Right lobe of liver (tissue), 6 donors: ENCODE measurements at regions of chr2 and their contacts with region 1.

Region 1: DNA sequence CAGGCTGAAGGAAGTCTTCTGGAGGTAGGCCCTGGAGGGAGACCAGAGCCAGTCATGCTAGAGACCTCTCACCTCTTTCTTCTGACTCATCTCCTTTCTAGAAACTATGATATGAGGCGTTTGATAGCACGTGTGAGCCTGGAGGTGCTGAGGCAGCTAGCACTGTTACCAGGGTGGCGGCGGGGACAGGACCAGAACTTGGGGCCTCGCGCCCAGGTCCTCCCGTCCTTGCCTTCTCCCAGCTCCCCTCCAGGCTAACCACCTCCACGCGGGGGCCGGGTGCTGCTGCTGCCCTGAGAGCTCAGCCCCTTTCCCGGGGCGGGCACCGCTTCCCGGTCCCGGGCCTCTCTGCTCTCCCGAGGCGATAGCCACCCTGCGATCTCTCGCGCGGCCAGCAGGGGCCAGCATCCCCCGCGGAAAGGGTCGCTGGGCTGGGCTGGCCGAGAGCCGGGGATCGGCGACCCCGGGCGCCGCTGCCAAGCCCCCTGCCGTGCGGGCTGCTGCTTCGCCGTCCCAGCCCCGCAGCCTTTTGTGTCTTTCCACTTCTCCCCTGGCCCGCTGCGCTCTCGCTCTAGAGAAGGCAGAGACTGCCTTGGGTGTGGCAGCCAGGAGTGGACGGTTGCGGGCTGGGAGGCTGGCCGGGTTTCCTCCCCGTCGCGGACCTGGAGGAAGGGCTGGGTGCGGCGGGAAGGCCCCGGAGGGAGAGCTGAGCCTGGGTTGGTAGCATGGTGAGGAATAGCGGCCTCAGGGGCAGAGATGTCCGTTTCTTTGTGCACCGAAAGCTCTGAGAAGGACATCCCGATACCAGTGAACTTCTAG is 49.1 kb downstream of the TMEM17 start:
- DNase-seq: peak; percentile 82 to 85 (median 84)
- ATAC-seq: peak; percentile 85 to 90 (median 86)
- H3K4me3 ChIP-seq: peak overlapping the region; percentile 64 to 76 (median 69)
- H3K27ac ChIP-seq: peak overlapping the region; percentile 89 to 91 (median 89)
- H3K4me1 ChIP-seq: peaks cover 0 to 37% (median 18%) of the 10 kb centered on the region in 4 donors
- H3K27me3 ChIP-seq: no peaks in the 10 kb centered on the region
- CTCF ChIP-seq: peak; percentile 92 to 99 (median 98)
- POLR2A ChIP-seq: no peak

Region 2: DNA sequence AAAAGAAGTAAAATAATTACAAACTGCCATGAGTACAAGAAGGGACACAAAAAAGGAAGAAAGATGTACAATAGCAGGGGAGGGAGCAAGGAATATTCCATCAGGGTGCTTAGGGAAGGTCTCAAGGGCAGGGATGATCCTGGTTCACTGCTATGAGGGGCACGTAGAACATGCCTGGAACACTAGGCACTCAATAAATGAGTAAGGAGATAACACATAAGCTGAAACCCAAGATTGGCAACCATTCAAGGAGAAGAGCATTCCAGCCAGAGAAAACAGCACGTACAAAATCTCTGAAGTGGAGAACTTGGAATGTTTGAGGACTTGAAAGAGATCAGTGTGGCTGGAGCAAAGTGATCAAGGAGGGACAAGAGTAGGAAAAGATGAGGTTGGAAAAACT is 706.3 kb before region 1 on chr2:
- intact Hi-C with region 1: no loop called
- DNase-seq: no peak
- ATAC-seq: peak in 1 of 4 donors; percentile 24
- H3K4me3 ChIP-seq: no peak overlapping the region
- H3K27ac ChIP-seq: no peak overlapping the region
- H3K4me1 ChIP-seq: no peaks in the 10 kb centered on the region
- H3K27me3 ChIP-seq: no peaks in the 10 kb centered on the region
- CTCF ChIP-seq: no peak
- POLR2A ChIP-seq: no peak

Region 3: GRCh38 chr2:62577994-62578781 is 121.3 kb after region 1 on chr2:
- intact Hi-C with region 1: loop called in 1 of 2 experiments (anchors 10 kb)
- DNase-seq: no peak
- ATAC-seq: peak in 1 of 4 donors; percentile 50
- H3K4me3 ChIP-seq: no peak overlapping the region
- H3K27ac ChIP-seq: no peak overlapping the region
- H3K4me1 ChIP-seq: peaks cover 0 to 4% (median 0%) of the 10 kb centered on the region in 4 donors
- H3K27me3 ChIP-seq: no peaks in the 10 kb centered on the region
- CTCF ChIP-seq: no peak
- POLR2A ChIP-seq: no peak

Region 4: DNA sequence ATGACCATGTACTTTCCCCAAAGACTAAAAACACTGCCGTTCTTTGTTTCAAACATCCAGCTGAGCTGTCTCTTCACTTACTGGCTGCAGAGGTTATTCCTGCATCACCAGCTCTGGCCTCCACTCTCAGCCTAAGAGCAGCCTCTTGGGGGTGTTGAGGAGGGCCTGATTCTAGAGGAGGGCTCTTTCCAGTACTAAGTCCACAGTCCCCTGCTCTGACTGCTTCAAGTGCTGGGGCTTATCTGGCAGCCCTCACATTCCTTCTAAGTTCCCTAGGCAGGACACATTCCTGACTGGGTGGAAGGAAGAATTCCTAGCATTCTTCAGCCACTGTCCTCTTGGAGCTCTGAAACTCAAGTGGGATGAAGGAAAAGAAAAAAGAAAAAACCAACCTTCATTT is 215.7 kb after region 1 on chr2:
- intact Hi-C with region 1: no loop called
- DNase-seq: no peak
- ATAC-seq: peak in 2 of 4 donors; percentile 25 to 37
- H3K4me3 ChIP-seq: no peak overlapping the region
- H3K27ac ChIP-seq: no peak overlapping the region
- H3K4me1 ChIP-seq: no peaks in the 10 kb centered on the region
- H3K27me3 ChIP-seq: no peaks in the 10 kb centered on the region
- CTCF ChIP-seq: no peak
- POLR2A ChIP-seq: no peak